ENCODE measurements at regions of chr1 and their contacts with region 1.

Region 1: GRCh38 chr1:42035830-42036604 is 117.2 kb upstream of the GUCA2B start:
- DNase-seq: peak; percentile 94 to 97
- H3K4me3 ChIP-seq: peak overlapping the region; percentile 79 to 91 (median 90)
- H3K27ac ChIP-seq: peak overlapping the region; percentile 78 to 87
- H3K4me1 ChIP-seq: peaks cover 0 to 7% of the 10 kb centered on the region in 2 donors
- H3K27me3 ChIP-seq: no peaks in the 10 kb centered on the region
- CTCF ChIP-seq: no peak
- POLR2A ChIP-seq: no peak

Region 2: DNA sequence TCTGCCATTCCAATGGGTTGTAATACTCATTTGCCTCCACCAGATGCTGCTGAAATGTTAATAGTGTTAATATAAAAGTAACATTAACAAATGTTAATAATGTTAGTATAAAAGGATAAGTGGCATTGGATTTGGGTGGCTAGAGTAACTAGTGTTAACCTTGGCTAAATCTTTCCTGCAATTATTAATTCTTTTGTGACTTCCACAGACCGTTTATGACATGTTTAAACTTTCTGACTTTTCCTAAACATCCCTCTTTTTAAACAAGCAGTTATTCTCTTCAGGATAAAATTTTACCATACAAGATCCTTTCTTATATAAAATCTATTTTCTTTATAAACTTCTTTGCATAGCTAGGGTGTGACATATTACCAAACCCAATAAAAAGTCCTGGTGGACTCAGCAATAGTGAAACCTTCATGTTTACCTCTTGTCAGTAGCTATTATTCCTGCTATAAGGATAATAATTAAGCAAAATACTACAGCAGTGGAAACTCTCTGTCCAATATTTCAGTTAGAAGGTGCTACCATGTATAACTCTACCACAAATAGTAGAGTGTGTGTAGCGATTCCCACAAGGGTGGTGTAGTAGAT is 468.6 kb after region 1 on chr1:
- intact Hi-C with region 1: loop called (anchors 5 kb)
- DNase-seq: no peak
- H3K4me3 ChIP-seq: no peak overlapping the region
- H3K27ac ChIP-seq: no peak overlapping the region
- H3K4me1 ChIP-seq: no peaks in the 10 kb centered on the region
- H3K27me3 ChIP-seq: no peaks in the 10 kb centered on the region
- CTCF ChIP-seq: no peak
- POLR2A ChIP-seq: no peak

Region 3: GRCh38 chr1:43008115-43009060 is 972.4 kb after region 1 on chr1:
- intact Hi-C with region 1: no loop called
- DNase-seq: no peak
- H3K4me3 ChIP-seq: no peak overlapping the region
- H3K27ac ChIP-seq: peak overlapping the region; percentile 54 to 84
- H3K4me1 ChIP-seq: no peaks in the 10 kb centered on the region
- H3K27me3 ChIP-seq: no peaks in the 10 kb centered on the region
- CTCF ChIP-seq: no peak
- POLR2A ChIP-seq: no peak

Measured in breast epithelium (tissue), 4 donors.